Heart right ventricle (tissue), 16 donors: ENCODE measurements at regions of chr1 and their contacts with region 1.

Region 1: GRCh38 chr1:216600730-216601609 is 122.3 kb downstream of the ESRRG start:
- DNase-seq: peak; percentile 75 to 81
- ATAC-seq: peak; percentile 91 to 99 (median 95)
- H3K4me3 ChIP-seq: peak overlapping the region; percentile 45 to 78 (median 66)
- H3K27ac ChIP-seq: peak overlapping the region; percentile 87 to 98 (median 96)
- H3K4me1 ChIP-seq: peaks cover 0 to 25% (median 7%) of the 10 kb centered on the region in 9 donors
- H3K27me3 ChIP-seq: peaks cover 0 to 7% (median 0%) of the 10 kb centered on the region in 7 donors
- CTCF ChIP-seq: peak; percentile 14 to 74 (median 52)

Region 2: GRCh38 chr1:216576234-216576937 is 24.6 kb before region 1 on chr1:
- intact Hi-C with region 1: loop called in 1 of 10 experiments (anchors 1 kb)
- DNase-seq: no peak
- ATAC-seq: peak in 4 of 8 donors; percentile 28 to 39 (median 31)
- H3K4me3 ChIP-seq: no peak overlapping the region
- H3K27ac ChIP-seq: no peak overlapping the region
- H3K4me1 ChIP-seq: peaks cover 0 to 21% (median 5%) of the 10 kb centered on the region in 9 donors
- H3K27me3 ChIP-seq: no peaks in the 10 kb centered on the region
- CTCF ChIP-seq: no peak

Region 3: DNA sequence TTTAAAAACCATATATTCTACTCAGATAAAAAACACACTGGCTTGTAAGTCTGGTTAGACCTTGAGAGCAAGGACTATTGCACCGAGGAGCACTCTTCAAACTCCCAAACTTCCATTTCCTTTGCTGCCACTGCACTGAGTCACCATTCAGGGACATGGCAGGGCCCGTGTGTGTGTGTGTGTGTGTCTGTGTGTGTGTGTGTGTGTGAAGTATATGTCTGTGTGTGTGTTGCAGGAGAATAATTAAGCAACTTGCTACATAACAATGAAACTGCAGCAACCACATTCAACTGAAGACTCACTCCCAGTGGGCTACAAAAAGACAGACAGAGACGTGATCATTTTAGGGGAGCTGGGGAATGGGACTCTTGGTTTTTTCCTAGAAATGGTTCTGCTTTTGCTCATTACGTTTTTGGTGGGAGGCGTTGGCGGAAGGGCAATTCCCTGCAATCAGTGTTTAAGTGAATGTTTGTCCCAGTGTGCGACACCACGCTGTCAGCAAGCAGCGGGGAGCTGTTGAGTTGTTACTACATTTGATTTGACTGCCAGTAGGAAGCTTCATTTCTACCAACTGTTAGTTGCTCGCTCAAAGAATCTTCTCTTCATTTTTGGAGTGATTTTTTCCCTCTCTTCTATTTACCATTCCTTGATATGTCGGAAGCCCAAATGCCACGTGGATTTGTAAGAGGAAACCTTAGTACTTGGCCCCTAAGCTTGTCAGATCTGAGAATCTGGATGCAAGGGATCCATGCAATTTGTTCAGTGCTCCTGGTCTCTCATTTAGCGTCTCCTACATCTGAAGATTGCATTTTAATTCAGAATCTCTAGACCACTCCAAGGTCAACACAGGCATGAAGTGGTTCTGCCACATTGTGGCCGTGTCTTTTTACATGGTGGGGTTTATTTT is 86.1 kb after region 1 on chr1:
- intact Hi-C with region 1: loop called in 1 of 10 experiments (anchors 5 kb)
- DNase-seq: peak in 1 of 2 donors; percentile 10
- ATAC-seq: peak in 6 of 8 donors; percentile 38 to 83 (median 82)
- H3K4me3 ChIP-seq: peak overlapping the region in 3 of 10 donors; percentile 6 to 25 (median 17)
- H3K27ac ChIP-seq: peak overlapping the region in 1 of 10 donors; percentile 26
- H3K4me1 ChIP-seq: peaks cover 0 to 16% (median 0%) of the 10 kb centered on the region in 9 donors
- H3K27me3 ChIP-seq: no peaks in the 10 kb centered on the region
- CTCF ChIP-seq: peak in 1 of 9 donors; percentile 11

Region 4: DNA sequence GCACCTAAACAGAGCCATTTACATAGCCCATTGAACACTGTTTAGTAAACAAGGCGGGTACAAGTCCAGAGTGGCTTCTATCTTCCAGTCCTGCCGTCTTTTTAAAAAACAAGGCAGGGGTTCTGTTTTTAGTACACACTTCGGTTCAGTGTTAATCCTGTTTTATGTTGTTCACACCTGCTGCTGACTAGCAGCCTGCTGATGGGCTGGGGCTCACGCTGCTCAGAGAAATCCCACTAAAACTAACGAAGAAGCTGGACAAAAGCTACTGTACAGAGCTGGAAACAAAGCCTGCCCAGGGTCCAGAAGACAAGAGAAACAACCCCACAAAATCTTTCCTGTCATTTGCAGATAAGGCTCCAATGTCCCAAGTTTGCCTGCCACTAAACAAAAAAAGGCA is 109.1 kb after region 1 on chr1:
- intact Hi-C with region 1: loop called in 1 of 10 experiments (anchors 10 kb)
- DNase-seq: no peak
- ATAC-seq: peak in 7 of 8 donors; percentile 38 to 81 (median 55)
- H3K4me3 ChIP-seq: no peak overlapping the region
- H3K27ac ChIP-seq: peak overlapping the region in 2 of 10 donors; percentile 11 to 18
- H3K4me1 ChIP-seq: peaks cover 0 to 28% (median 5%) of the 10 kb centered on the region in 9 donors
- H3K27me3 ChIP-seq: peaks cover 0 to 3% (median 0%) of the 10 kb centered on the region in 7 donors
- CTCF ChIP-seq: no peak

Region 5: DNA sequence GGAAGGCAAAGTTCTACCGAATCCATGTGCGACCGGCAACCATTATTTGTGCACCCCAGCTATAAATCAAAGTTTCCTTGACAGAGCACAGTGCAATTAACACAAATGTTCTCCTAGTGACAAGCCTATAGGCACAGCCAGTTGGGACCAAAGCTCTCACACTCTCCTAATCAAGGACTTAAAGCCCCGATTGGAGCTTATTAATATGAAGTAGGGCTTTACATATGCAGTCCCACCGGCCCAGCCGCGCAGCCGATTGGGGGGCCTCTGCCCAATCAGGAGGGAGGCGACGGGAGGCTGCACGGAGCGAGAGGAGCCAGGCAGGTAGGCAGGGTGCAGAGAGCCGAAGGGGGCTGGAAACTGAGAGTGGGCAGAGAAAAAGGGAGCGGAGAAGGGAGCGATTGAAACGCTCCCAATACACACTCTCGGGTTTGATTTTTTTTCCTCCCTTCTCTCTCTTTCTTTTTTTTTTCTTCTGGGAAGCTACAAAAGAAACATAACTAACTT is 122.4 kb after region 1 on chr1 and contains the start of gene ESRRG:
- intact Hi-C with region 1: loop called in 3 of 10 experiments (anchors 5 to 10 kb)
- DNase-seq: peak; percentile 56 to 71
- ATAC-seq: peak; percentile 89 to 98 (median 96)
- H3K4me3 ChIP-seq: peak within 1 kb of the TSS; percentile 12 to 57 (median 45)
- H3K27ac ChIP-seq: peak within 1 kb of the TSS in 9 of 10 donors; percentile 29 to 67 (median 50)
- H3K4me1 ChIP-seq: peaks cover 0 to 8% (median 0%) of the 10 kb centered on the region in 9 donors
- H3K27me3 ChIP-seq: peaks cover 0 to 51% (median 28%) of the 10 kb centered on the region in 7 donors
- CTCF ChIP-seq: no peak
- total RNA-seq, gene ESRRG: 24.3 to 49.5 (median 36.7) TPM